ENCODE measurements at regions of chr7 and their contacts with region 1.

Region 1: GRCh38 chr7:10412422-10413019 is 561.2 kb upstream of the PHF14 start:
- DNase-seq: no peak
- ATAC-seq: no peak

Region 2: DNA sequence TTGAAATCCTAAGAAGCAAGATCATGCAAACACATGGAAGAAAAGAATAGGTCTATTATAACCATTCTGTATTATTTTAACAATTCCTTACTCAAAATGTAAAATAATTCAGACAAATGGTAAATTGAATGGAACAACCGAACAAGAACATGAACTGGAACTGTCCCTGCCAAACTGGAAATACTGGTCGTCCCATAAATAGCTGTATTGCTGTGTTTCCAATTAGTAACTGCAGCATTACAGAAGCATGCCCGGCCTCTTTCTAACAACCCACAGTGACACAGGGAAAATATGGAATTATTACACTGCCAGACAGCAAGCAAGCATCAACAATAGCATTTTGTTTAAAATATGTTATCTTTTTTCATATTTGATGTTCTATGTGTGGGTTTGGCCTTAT is 577.3 kb before region 1 on chr7:
- intact Hi-C with region 1: no loop called
- DNase-seq: no peak
- ATAC-seq: no peak

Region 3: GRCh38 chr7:10022957-10023356 is 389.6 kb before region 1 on chr7:
- intact Hi-C with region 1: loop called (anchors 10 kb)
- DNase-seq: no peak
- ATAC-seq: no peak